Naive thymus-derived CD4-positive, alpha-beta T cell (primary cell): ENCODE measurements at regions of chr1 and their contacts with region 1.

Region 1: GRCh38 chr1:159924981-159925712 is at the start of gene TAGLN2:
- DNase-seq: peak; percentile 81 to 94 (median 86)
- ATAC-seq: peak; percentile 63
- H3K4me3 ChIP-seq: peak within 1 kb of the TSS; percentile 95
- H3K4me3 Mint-ChIP-seq: peak within 1 kb of the TSS; percentile 88 to 99 (median 94)
- H3K27ac ChIP-seq: peak within 1 kb of the TSS; percentile 95
- H3K27ac Mint-ChIP-seq: peak within 1 kb of the TSS; percentile 96 to 100 (median 99)
- H3K4me1 ChIP-seq: peaks cover 27 to 35% of the 10 kb centered on the region in 2 donors
- H3K4me1 Mint-ChIP-seq: peaks cover 34 to 54% (median 46%) of the 10 kb centered on the region in 7 donors
- H3K27me3 ChIP-seq: no peaks in the 10 kb centered on the region
- H3K27me3 Mint-ChIP-seq: peaks cover 0 to 11% (median 0%) of the 10 kb centered on the region in 5 donors
- total RNA-seq, gene TAGLN2: 116 to 450 (median 284) TPM

Region 2: GRCh38 chr1:159780583-159781582 is 144.3 kb before region 1 on chr1 and contains the start of gene DUSP23:
- CTCF ChIA-PET with region 1: interaction called, 3 read pairs
- POLR2A ChIA-PET with region 1: interaction called, 3 read pairs
- intact Hi-C with region 1: loop called (anchors 1 kb)
- DNase-seq: peak; percentile 88 to 96 (median 96)
- ATAC-seq: peak; percentile 97
- H3K4me3 ChIP-seq: peak within 1 kb of the TSS; percentile 69
- H3K4me3 Mint-ChIP-seq: peak within 1 kb of the TSS; percentile 78 to 93 (median 84)
- H3K27ac ChIP-seq: peak within 1 kb of the TSS; percentile 66
- H3K27ac Mint-ChIP-seq: peak within 1 kb of the TSS; percentile 2 to 94 (median 85)
- H3K4me1 ChIP-seq: peaks cover 6% of the 10 kb centered on the region in 2 donors
- H3K4me1 Mint-ChIP-seq: peaks cover 9 to 33% (median 28%) of the 10 kb centered on the region in 7 donors
- H3K27me3 ChIP-seq: no peaks in the 10 kb centered on the region
- H3K27me3 Mint-ChIP-seq: peaks cover 0 to 11% (median 0%) of the 10 kb centered on the region in 5 donors
- total RNA-seq, gene DUSP23: 7.4 to 18.9 (median 12.2) TPM

Region 3: DNA sequence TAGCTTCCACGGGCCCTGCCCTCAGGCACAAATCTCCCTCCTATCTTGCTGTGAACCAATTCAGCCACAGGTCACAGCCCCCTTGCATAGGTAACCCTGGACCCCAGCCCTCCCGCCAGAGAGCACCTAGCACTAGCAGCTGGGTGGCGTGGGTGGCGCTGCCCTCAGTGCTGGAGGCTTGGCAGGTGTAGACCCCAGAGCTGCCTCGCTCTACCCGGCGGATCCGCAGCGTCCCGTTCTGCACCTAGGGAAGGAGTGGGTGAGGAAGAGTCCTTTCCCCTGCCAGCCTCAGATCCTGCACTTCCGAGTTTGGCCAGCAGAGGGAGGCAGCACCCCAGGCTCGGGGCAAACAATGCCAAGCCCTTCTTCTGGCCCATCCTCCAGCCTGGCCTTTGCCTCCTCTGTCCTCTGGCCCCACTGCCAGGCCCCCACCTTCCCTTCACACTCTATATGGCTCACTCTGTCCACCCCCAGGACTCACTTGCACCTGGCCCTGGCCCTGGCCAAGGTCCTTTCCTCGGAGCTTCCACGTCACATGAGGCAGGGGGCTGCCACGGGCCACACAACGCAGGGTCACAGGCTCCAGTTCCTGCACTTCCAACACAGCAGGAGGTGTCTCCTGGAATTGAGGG is 11.2 kb after region 1 on chr1:
- CTCF ChIA-PET with region 1: interaction called, 5 read pairs
- POLR2A ChIA-PET with region 1: interaction called, 19 read pairs
- intact Hi-C with region 1: loop called in 1 of 2 experiments (anchors 1 kb)
- DNase-seq: peak; percentile 49 to 90 (median 74)
- ATAC-seq: peak; percentile 90
- H3K4me3 ChIP-seq: no peak overlapping the region
- H3K4me3 Mint-ChIP-seq: no peak overlapping the region
- H3K27ac ChIP-seq: no peak overlapping the region
- H3K27ac Mint-ChIP-seq: peak overlapping the region in 1 of 9 donors; percentile 17
- H3K4me1 ChIP-seq: no peaks in the 10 kb centered on the region
- H3K4me1 Mint-ChIP-seq: peaks cover 0 to 20% (median 11%) of the 10 kb centered on the region in 7 donors
- H3K27me3 ChIP-seq: no peaks in the 10 kb centered on the region
- H3K27me3 Mint-ChIP-seq: peaks cover 0 to 23% (median 8%) of the 10 kb centered on the region in 5 donors

Region 4: DNA sequence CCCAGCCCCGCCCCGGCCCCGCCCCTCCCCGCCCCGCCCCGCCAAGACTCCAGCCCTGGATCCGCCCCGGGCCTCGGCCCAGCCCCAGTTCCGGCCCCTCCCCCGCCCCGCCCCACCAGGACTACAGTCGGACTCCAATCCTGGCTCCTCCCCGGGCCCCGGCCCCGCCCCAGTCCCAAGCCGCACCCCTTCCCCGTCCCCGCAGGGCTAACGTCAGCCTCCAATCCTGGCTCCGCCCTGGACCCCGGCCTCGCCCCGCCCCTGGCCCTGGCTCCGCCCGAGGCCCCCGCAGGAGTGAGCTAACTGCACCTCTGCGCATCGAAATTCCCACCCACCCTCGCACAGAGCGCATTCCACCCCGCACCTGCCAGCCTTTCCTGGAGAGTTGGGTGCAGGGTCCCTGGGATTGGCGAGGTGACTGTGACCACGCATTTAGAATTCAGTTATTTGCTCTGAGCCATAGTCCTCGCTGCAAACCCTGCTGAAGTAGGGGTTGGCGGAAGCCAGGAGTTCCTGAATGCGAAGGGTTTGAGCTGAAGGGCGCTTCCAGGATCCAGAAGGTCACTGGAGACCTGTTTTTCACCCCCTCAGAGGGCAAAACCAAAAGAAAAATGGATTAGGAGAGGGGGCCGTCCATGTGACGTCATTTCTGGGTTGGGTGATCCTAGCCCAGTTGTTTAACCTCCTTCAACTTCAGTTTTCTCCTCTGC is 173.9 kb after region 1 on chr1:
- CTCF ChIA-PET with region 1: no interaction called
- POLR2A ChIA-PET with region 1: interaction called, 8 read pairs
- intact Hi-C with region 1: loop called (anchors 1 kb)
- DNase-seq: peak; percentile 94 to 98 (median 96)
- ATAC-seq: peak; percentile 90
- H3K4me3 ChIP-seq: peak overlapping the region; percentile 85
- H3K4me3 Mint-ChIP-seq: peak overlapping the region; percentile 74 to 95 (median 86)
- H3K27ac ChIP-seq: peak overlapping the region; percentile 96
- H3K27ac Mint-ChIP-seq: peak overlapping the region; percentile 88 to 99 (median 97)
- H3K4me1 ChIP-seq: peaks cover 28 to 49% of the 10 kb centered on the region in 2 donors
- H3K4me1 Mint-ChIP-seq: peaks cover 36 to 84% (median 64%) of the 10 kb centered on the region in 7 donors
- H3K27me3 ChIP-seq: no peaks in the 10 kb centered on the region
- H3K27me3 Mint-ChIP-seq: no peaks in the 10 kb centered on the region

Region 5: GRCh38 chr1:161314201-161314981 is 1389.2 kb after region 1 on chr1 and contains the start of gene SDHC:
- CTCF ChIA-PET with region 1: no interaction called
- POLR2A ChIA-PET with region 1: no interaction called
- intact Hi-C with region 1: loop called in 1 of 2 experiments (anchors 5 kb)
- DNase-seq: peak; percentile 83 to 95 (median 93)
- ATAC-seq: peak; percentile 99
- H3K4me3 ChIP-seq: peak within 1 kb of the TSS; percentile 72
- H3K4me3 Mint-ChIP-seq: peak within 1 kb of the TSS; percentile 91 to 99 (median 98)
- H3K27ac ChIP-seq: peak within 1 kb of the TSS; percentile 97
- H3K27ac Mint-ChIP-seq: peak within 1 kb of the TSS; percentile 98 to 100 (median 99)
- H3K4me1 ChIP-seq: peaks cover 0 to 15% of the 10 kb centered on the region in 2 donors
- H3K4me1 Mint-ChIP-seq: peaks cover 13 to 39% (median 31%) of the 10 kb centered on the region in 7 donors
- H3K27me3 ChIP-seq: no peaks in the 10 kb centered on the region
- H3K27me3 Mint-ChIP-seq: peaks cover 0 to 7% (median 0%) of the 10 kb centered on the region in 5 donors
- total RNA-seq, gene SDHC: 66.3 to 174 (median 106) TPM

Region 6: DNA sequence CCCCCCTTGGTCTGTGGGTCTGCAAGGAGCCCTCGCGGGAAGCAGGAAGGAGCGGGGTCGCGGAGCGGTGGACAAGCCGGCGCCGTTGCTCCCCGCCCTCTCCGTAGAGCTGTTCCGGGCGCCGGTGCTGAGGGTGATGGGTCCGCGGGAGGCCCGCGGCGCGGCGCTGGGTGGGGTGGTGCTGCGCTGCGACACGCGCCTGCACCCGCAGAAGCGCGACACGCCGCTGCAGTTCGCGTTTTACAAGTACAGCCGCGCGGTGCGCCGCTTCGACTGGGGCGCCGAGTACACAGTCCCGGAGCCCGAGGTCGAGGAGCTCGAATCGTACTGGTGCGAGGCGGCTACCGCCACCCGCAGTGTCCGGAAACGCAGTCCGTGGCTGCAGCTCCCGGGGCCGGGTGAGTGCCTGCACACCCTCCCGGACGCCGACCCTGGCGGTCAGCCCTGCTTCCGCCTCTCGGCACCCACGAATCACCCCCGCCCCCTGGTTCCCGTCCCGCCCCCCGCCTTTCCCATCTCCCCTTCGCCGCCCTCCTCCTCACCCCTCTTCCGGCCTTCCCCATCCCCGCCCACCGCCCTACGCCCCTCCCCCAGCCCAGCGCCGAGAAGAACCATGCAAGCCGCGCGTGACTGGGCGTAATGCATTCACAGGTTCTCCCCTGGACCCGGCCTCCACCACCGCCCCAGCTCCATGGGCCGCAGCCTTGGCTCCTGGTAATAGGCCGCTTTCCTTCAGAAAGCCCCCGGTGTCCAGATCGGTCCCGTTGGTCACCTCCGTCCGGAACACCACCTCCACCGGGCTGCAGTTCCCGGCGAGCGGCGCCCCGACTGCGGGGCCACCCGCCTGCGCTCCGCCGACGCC is 1801.7 kb after region 1 on chr1:
- CTCF ChIA-PET with region 1: no interaction called
- POLR2A ChIA-PET with region 1: no interaction called
- intact Hi-C with region 1: loop called in 1 of 2 experiments (anchors 10 kb)
- DNase-seq: peak; percentile 48 to 68 (median 64)
- ATAC-seq: peak; percentile 73
- H3K4me3 ChIP-seq: peak overlapping the region; percentile 93
- H3K4me3 Mint-ChIP-seq: peak overlapping the region; percentile 89 to 100 (median 99)
- H3K27ac ChIP-seq: peak overlapping the region; percentile 59
- H3K27ac Mint-ChIP-seq: peak overlapping the region in 6 of 9 donors; percentile 38 to 94 (median 72)
- H3K4me1 ChIP-seq: peaks cover 11 to 16% of the 10 kb centered on the region in 2 donors
- H3K4me1 Mint-ChIP-seq: peaks cover 30 to 51% (median 35%) of the 10 kb centered on the region in 7 donors
- H3K27me3 ChIP-seq: no peaks in the 10 kb centered on the region
- H3K27me3 Mint-ChIP-seq: peaks cover 0 to 76% (median 0%) of the 10 kb centered on the region in 5 donors